ENCODE measurements at regions of chr5 and their contacts with region 1.

Region 1: GRCh38 chr5:181151146-181151545 is 3.8 kb downstream of the OR2V2 start:
- DNase-seq: peak; percentile 48
- H3K4me3 ChIP-seq: no peak overlapping the region
- H3K27ac ChIP-seq: no peak overlapping the region
- H3K4me1 ChIP-seq: peaks cover 25% of the 10 kb centered on the region
- CTCF ChIP-seq: 0 out of 2 replicates have a peak, but pooled peaks have one; percentile 49

Region 2: GRCh38 chr5:180868960-180869359 is 282.2 kb before region 1 on chr5:
- CTCF ChIA-PET with region 1: no interaction called
- POLR2A ChIA-PET with region 1: no interaction called
- intact Hi-C with region 1: loop called (anchors 2 kb)
- DNase-seq: peak; percentile 78
- H3K4me3 ChIP-seq: no peak overlapping the region
- H3K27ac ChIP-seq: no peak overlapping the region
- H3K4me1 ChIP-seq: peaks cover 15% of the 10 kb centered on the region
- CTCF ChIP-seq: peak; percentile 97